Psoas muscle (tissue), 8 donors: ENCODE measurements at regions of chr13 and their contacts with region 1.

Region 1: GRCh38 chr13:41502673-41503072 is 45.3 kb downstream of the RGCC start:
- DNase-seq: no peak
- ATAC-seq: no peak
- H3K4me3 ChIP-seq: no peak overlapping the region
- H3K27ac ChIP-seq: no peak overlapping the region
- H3K4me1 ChIP-seq: no peaks in the 10 kb centered on the region
- H3K27me3 ChIP-seq: no peaks in the 10 kb centered on the region
- CTCF ChIP-seq: no peak

Region 2: GRCh38 chr13:40876020-40876738 is 626.5 kb before region 1 on chr13:
- intact Hi-C with region 1: loop called in 1 of 2 experiments (anchors 5 kb)
- DNase-seq: no peak
- ATAC-seq: peak in 2 of 4 donors; percentile 45 to 54
- H3K4me3 ChIP-seq: no peak overlapping the region
- H3K27ac ChIP-seq: no peak overlapping the region
- H3K4me1 ChIP-seq: no peaks in the 10 kb centered on the region
- H3K27me3 ChIP-seq: no peaks in the 10 kb centered on the region
- CTCF ChIP-seq: no peak

Region 3: DNA sequence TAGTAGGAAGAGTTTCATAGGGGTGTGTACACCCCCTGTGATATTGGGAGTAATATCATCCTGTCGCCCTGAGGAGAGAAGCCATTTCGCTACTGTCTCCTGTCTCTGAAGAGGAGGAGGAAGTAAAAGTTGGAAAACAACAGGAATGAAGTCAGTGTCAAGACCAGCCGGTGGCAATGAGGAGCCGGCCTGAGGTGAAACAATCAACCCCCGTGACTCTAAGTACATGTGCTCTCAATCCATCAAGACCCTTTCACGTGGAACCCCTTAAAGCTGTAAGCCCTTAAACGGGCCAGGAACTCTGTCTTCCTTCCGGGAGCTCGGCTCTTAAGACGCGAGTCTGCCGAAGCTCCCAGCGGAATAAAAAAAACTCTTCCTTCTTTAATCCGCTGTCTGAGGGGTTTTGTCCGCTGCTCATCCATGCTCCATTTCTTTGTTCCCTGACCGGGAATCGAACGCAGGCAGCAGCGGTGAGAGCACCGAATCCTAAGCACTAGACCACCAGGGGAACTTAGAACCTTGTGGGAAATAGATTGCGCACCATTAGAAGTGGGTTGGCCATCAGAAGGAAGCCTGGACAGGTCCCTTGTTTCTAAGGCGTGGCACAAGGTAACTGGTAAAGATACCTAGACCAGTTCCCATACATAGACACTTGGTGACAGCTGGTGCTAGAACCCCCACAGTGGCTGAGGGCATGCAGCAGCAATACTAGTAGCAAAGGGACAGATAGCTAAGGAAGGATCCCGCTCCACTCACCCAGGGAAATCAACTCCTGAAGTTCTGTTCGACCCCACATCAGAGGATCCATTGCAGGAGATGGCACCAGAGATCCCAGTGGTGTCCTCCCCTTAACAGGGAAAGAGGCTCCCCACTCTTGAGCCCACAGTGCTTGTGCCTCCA is 46.9 kb before region 1 on chr13:
- intact Hi-C with region 1: no loop called
- DNase-seq: no peak
- ATAC-seq: no peak
- H3K4me3 ChIP-seq: no peak overlapping the region
- H3K27ac ChIP-seq: no peak overlapping the region
- H3K4me1 ChIP-seq: peaks cover 14% of the 10 kb centered on the region
- H3K27me3 ChIP-seq: peaks cover 0 to 52% (median 7%) of the 10 kb centered on the region in 3 donors
- CTCF ChIP-seq: no peak

Region 4: DNA sequence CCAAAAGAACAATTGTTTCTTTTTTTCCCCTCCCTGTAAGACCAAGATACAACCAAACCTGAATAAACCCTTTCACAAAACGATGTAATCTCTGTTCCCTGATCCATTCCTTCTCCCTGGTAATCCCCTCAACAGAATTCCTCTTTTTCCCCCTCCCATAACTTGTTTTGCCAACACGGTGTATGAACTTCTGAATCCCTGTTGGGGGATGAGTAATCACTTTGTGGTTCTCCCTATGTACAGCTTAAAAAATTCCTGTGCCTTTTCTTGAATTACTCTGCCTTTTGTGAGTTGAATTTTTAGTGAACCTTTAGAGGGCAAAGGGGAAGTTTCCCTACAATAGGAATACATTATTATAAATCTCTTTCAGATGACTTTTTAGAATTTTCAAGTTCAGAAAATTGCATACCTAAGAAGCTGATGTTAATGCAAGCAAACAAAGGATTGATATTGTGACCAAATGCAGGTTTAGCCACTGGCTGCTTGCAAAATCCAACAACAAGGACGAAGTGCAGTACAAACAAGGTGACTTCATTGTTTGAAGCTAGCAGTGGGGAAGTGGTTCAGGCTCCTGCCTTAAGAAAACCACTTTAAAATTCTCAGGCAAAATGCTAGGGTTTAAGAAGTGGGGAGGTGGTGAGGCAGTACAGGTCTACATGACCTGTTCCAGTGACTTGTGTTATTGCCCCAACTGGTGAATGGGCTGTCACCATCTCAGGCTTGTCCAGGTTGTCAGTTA is 1504.4 kb after region 1 on chr13:
- intact Hi-C with region 1: no loop called
- DNase-seq: no peak
- ATAC-seq: no peak
- H3K4me3 ChIP-seq: no peak overlapping the region
- H3K27ac ChIP-seq: no peak overlapping the region
- H3K4me1 ChIP-seq: no peaks in the 10 kb centered on the region
- H3K27me3 ChIP-seq: peaks cover 0 to 4% (median 0%) of the 10 kb centered on the region in 3 donors
- CTCF ChIP-seq: no peak